Endothelial cell of umbilical vein (primary cell): ENCODE measurements at regions of chr13 and their contacts with region 1.

Region 1: DNA sequence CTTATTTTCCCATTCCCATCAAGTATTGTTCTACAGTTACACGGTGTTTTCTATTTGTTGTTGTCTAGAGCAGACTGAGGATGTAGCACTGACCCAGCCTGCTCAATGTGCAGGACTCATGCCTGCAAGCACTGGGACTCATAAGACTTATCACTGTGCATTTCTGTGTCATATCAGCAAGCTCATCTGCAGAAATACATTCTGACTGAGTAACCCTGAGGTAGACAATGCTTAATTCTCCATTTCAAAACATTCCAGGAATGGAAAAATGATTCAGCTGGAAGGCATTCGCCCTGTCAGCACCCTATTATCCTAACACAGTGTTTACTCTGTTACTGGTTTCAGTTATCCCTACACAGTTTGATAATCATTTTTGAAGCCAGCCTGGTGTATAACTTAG is 2506.4 kb downstream of the PCDH9 start:
- DNase-seq: peak; percentile 97
- H3K4me3 ChIP-seq: no peak overlapping the region
- H3K27ac ChIP-seq: peak overlapping the region; percentile 89
- H3K4me1 ChIP-seq: peaks cover 20% of the 10 kb centered on the region
- H3K27me3 ChIP-seq: no peaks in the 10 kb centered on the region
- CTCF ChIP-seq: no peak
- POLR2A ChIP-seq: peak; percentile 60

Region 2: GRCh38 chr13:64234255-64234654 is 489.5 kb before region 1 on chr13:
- CTCF ChIA-PET with region 1: no interaction called
- POLR2A ChIA-PET with region 1: no interaction called
- dilution Hi-C with region 1: no loop called
- intact Hi-C with region 1: loop called (anchors 1 kb)
- DNase-seq: peak; percentile 93
- H3K4me3 ChIP-seq: no peak overlapping the region
- H3K27ac ChIP-seq: peak overlapping the region; percentile 61
- H3K4me1 ChIP-seq: peaks cover 14% of the 10 kb centered on the region
- H3K27me3 ChIP-seq: no peaks in the 10 kb centered on the region
- CTCF ChIP-seq: no peak
- POLR2A ChIP-seq: no peak

Region 3: GRCh38 chr13:64480211-64480610 is 243.5 kb before region 1 on chr13:
- CTCF ChIA-PET with region 1: no interaction called
- POLR2A ChIA-PET with region 1: no interaction called
- dilution Hi-C with region 1: no loop called
- intact Hi-C with region 1: no loop called
- DNase-seq: no peak
- H3K4me3 ChIP-seq: no peak overlapping the region
- H3K27ac ChIP-seq: no peak overlapping the region
- H3K4me1 ChIP-seq: peaks cover 4% of the 10 kb centered on the region
- H3K27me3 ChIP-seq: no peaks in the 10 kb centered on the region
- CTCF ChIP-seq: no peak
- POLR2A ChIP-seq: no peak

Region 4: DNA sequence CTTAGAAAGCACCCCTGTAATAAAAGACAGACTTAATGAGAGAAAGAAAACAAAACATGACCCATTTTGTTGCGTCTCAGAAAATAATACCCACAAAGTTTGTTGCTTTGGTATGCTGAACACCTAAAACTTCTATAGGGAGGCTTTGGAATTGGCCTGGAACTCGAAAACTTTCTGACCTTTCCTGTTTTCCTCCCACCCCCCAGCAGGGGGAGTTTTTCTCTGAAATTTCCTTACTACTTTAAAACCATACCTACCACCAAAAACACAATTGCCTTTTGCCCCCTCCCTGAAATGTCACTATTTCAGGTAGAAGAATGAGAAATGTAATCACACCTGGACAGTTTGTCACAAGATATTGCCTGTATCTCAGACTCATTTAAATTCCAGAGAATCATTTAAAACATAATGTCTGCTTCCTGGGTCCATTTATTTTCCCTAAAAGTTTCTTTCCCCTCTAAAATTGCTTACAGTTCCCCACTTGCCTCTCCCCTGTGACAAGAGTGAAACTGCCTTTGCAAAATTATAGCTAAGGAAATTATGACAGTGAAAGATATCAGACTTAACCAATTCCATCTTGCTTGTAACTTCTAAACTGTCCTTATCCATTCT is 193.7 kb before region 1 on chr13:
- CTCF ChIA-PET with region 1: no interaction called
- POLR2A ChIA-PET with region 1: no interaction called
- dilution Hi-C with region 1: no loop called
- intact Hi-C with region 1: loop called (anchors 5 kb)
- DNase-seq: no peak
- H3K4me3 ChIP-seq: no peak overlapping the region
- H3K27ac ChIP-seq: no peak overlapping the region
- H3K4me1 ChIP-seq: no peaks in the 10 kb centered on the region
- H3K27me3 ChIP-seq: no peaks in the 10 kb centered on the region
- CTCF ChIP-seq: peak; percentile 29 to 37
- POLR2A ChIP-seq: no peak

Region 5: DNA sequence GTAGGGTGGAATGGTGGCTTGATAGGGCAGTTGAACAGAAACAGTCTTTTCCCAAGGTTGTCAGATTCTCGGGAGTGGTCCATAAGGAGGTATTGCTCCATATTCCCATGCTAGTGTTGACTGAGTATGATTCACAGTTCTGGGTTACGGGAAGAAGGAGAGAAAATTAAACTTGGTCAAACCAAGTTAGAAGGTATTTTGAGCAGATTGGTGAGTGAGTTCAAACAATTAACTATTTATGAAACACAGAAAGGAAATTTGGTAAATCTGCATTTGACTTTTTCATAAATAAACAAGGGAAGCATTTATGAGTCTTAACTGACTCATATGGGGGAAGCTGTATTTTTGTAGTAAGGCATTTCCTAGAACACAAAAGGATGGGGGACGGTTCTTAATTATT is 87.0 kb after region 1 on chr13:
- CTCF ChIA-PET with region 1: no interaction called
- POLR2A ChIA-PET with region 1: no interaction called
- dilution Hi-C with region 1: no loop called
- intact Hi-C with region 1: loop called (anchors 5 kb)
- DNase-seq: peak; percentile 65
- H3K4me3 ChIP-seq: no peak overlapping the region
- H3K27ac ChIP-seq: peak overlapping the region; percentile 69
- H3K4me1 ChIP-seq: peaks cover 17% of the 10 kb centered on the region
- H3K27me3 ChIP-seq: no peaks in the 10 kb centered on the region
- CTCF ChIP-seq: no peak
- POLR2A ChIP-seq: no peak